ENCODE measurements at regions of chr9 and their contacts with region 1.

Region 1: DNA sequence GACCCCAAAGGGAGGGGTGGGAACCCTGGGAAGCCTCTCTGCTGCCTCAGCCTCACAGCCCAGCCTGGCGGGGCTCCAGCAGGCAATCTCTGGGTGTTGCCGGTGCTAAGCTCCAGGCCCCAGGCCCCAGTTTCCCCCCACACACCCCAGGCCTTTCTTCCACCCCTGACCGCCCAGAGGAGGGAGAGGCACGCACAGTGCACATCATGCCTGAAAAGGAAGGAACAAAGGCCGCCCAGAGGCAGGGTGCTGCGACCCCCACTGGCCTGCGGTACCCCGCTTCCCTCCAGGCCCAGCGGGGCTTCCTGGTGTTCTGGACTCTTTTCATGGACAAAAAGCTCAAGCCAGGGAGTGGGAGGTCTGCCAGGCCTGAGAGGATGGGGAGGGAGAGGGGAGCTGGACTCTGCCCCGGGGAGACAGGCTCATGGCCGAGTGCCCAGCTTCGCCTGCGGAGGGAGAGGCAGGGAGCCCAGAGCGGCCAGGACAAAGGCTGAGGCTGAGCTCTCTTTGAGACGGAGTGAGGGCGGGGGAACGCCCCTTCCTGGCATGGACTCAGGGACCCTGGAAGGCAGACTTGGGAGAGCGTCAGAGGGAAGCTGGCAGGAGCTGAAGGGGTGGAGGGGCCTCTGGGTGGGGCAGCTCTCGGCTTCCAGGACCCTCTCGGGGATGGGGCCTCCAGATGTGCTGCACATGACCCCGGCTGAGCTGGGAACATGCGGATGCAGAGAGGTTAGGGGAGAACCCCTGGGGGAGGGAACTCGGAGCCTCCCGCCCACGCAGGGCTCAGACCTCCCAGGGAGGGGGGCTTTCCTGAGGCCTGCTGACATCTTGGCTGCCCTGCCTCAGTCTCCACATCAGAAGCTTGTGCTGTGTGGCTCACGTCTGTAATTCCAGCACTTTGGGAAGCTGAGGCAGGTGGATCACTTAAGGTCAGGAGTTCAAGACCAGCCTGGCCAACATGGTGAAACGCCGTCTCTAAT is 1.8 kb upstream of the ENTPD2 start:
- DNase-seq: no peak
- H3K4me3 ChIP-seq: no peak overlapping the region
- H3K27ac ChIP-seq: no peak overlapping the region
- H3K27me3 ChIP-seq: peaks cover 52% of the 10 kb centered on the region
- CTCF ChIP-seq: no peak

Region 2: GRCh38 chr9:136820971-136821825 is 234.5 kb before region 1 on chr9:
- CTCF ChIA-PET with region 1: no interaction called
- POLR2A ChIA-PET with region 1: interaction called, 10 read pairs
- DNase-seq: no peak
- H3K4me3 ChIP-seq: no peak overlapping the region
- H3K27ac ChIP-seq: no peak overlapping the region
- H3K27me3 ChIP-seq: no peaks in the 10 kb centered on the region
- CTCF ChIP-seq: no peak

Region 3: GRCh38 chr9:137302176-137302994 is 246.7 kb after region 1 on chr9 and contains the start of gene NRARP:
- CTCF ChIA-PET with region 1: no interaction called
- POLR2A ChIA-PET with region 1: no interaction called
- DNase-seq: no peak
- H3K4me3 ChIP-seq: peak within 1 kb of the TSS; percentile 47
- H3K27ac ChIP-seq: no peak within 1 kb of the TSS
- H3K27me3 ChIP-seq: peaks cover 24% of the 10 kb centered on the region
- CTCF ChIP-seq: peak; percentile 59
- polyA plus RNA-seq, gene NRARP: 0.17 and 0.22 TPM in 2 replicates

Measured in AG04450 (cell line).